GM12878 (cell line): ENCODE measurements at regions of chr10 and their contacts with region 1.

Region 1: DNA sequence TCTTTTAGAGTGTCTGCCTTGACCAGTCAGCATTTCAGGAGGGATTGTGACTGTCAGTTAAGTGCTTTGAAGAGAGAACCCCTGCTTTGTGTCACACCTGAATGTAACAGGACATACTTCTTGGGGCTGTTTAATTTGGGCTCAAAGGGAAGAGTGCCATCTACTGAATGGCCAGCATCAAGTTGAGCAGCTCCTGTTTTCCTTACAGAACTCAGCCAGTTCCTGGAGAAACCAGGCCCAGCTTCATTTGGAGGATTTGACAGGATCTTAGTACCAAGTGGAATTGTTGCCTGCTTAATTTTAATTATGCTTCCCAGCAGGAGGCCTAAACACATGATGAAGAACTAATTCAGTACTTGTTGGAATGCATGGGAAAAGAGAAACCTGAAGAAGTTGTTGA is 8.3 kb downstream of the ADD3 start:
- DNase-seq: no peak
- ATAC-seq: peak; percentile 65
- H3K4me3 ChIP-seq: no peak overlapping the region
- H3K27ac ChIP-seq: no peak overlapping the region
- H3K4me1 ChIP-seq: peaks cover 14% of the 10 kb centered on the region
- H3K27me3 ChIP-seq: no peaks in the 10 kb centered on the region
- CTCF ChIP-seq: peak; percentile 14 to 59 (median 33); a peak in 2 of 6 replicates
- EP300 ChIP-seq: no peak
- POLR2A ChIP-seq: no peak
- RAD21 ChIP-seq: peak; percentile 46

Region 2: DNA sequence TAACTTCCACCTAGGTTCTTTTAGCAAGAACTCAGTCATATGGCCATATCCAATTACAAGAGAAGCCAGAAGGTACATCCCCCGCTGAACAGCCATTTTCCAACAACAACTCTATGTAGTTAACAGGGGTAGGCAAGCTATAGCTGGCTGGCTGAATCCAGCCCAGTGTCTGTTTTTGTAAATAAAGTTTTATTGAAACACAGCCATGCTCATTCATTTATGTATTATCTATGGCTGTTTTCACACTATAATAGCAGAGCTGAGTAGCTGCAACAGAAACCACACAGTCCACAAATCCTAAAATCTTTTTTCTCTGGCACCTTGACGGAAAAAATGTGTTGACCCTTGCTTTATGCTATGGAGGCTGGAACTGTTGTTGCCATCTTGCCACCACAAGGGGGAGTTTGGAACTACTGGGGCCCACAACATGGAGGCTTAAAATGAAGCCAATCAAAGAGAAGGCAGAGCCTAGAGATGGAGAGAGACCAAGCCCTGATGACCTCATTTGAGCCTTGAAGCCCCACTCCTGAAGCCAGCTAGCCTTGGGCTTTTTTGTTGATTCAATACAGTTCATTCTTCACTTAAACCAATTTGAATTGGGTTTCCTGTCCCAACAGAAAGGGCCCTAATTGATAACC is 59.5 kb before region 1 on chr10:
- CTCF ChIA-PET with region 1: interaction called, 13 read pairs
- POLR2A ChIA-PET with region 1: no interaction called
- RAD21 ChIA-PET with region 1: interaction called, 7 read pairs
- SMC1A ChIA-PET with region 1: interaction called, 10 read pairs
- in situ Hi-C with region 1: no loop called
- intact Hi-C with region 1: no loop called
- DNase-seq: no peak
- ATAC-seq: peak; percentile 87
- H3K4me3 ChIP-seq: no peak overlapping the region
- H3K27ac ChIP-seq: peak overlapping the region; percentile 55
- H3K4me1 ChIP-seq: peaks cover 23% of the 10 kb centered on the region
- H3K27me3 ChIP-seq: no peaks in the 10 kb centered on the region
- CTCF ChIP-seq: peak; percentile 57 to 76 (median 67)
- EP300 ChIP-seq: no peak
- POLR2A ChIP-seq: no peak
- RAD21 ChIP-seq: peak; percentile 58

Region 3: GRCh38 chr10:109996225-109996624 is 19.8 kb before region 1 on chr10:
- CTCF ChIA-PET with region 1: interaction called, 22 read pairs
- POLR2A ChIA-PET with region 1: interaction called, 3 read pairs
- RAD21 ChIA-PET with region 1: interaction called, 7 read pairs
- SMC1A ChIA-PET with region 1: interaction called, 6 read pairs
- in situ Hi-C with region 1: no loop called
- intact Hi-C with region 1: no loop called
- DNase-seq: no peak
- ATAC-seq: peak; percentile 87
- H3K4me3 ChIP-seq: no peak overlapping the region
- H3K27ac ChIP-seq: peak overlapping the region; percentile 32; the same call in 1 of the 2 replicates
- H3K4me1 ChIP-seq: peaks cover 14% of the 10 kb centered on the region
- H3K27me3 ChIP-seq: no peaks in the 10 kb centered on the region
- CTCF ChIP-seq: no peak
- EP300 ChIP-seq: no peak
- POLR2A ChIP-seq: no peak
- RAD21 ChIP-seq: no peak

Region 4: GRCh38 chr10:110036640-110037039 is 20.6 kb after region 1 on chr10:
- CTCF ChIA-PET with region 1: interaction called, 8 read pairs
- POLR2A ChIA-PET with region 1: no interaction called
- RAD21 ChIA-PET with region 1: interaction called, 4 read pairs
- SMC1A ChIA-PET with region 1: interaction called, 15 read pairs
- in situ Hi-C with region 1: no loop called
- intact Hi-C with region 1: no loop called
- DNase-seq: peak; percentile 48
- ATAC-seq: peak; percentile 78
- H3K4me3 ChIP-seq: peak overlapping the region; percentile 20
- H3K27ac ChIP-seq: peak overlapping the region; percentile 42; the same call in 1 of the 2 replicates
- H3K4me1 ChIP-seq: peaks cover 16% of the 10 kb centered on the region
- H3K27me3 ChIP-seq: no peaks in the 10 kb centered on the region
- CTCF ChIP-seq: no peak
- EP300 ChIP-seq: 0 out of 4 replicates have a peak, but pooled peaks of 1 of the 2 experiments have one; percentile 17
- POLR2A ChIP-seq: no peak
- RAD21 ChIP-seq: no peak